Activated naive CD4-positive, alpha-beta T cell treated with anti-CD3 and anti-CD28 coated beads for 36 hours (primary cell): ENCODE measurements at regions of chr7 and their contacts with region 1.

Region 1: DNA sequence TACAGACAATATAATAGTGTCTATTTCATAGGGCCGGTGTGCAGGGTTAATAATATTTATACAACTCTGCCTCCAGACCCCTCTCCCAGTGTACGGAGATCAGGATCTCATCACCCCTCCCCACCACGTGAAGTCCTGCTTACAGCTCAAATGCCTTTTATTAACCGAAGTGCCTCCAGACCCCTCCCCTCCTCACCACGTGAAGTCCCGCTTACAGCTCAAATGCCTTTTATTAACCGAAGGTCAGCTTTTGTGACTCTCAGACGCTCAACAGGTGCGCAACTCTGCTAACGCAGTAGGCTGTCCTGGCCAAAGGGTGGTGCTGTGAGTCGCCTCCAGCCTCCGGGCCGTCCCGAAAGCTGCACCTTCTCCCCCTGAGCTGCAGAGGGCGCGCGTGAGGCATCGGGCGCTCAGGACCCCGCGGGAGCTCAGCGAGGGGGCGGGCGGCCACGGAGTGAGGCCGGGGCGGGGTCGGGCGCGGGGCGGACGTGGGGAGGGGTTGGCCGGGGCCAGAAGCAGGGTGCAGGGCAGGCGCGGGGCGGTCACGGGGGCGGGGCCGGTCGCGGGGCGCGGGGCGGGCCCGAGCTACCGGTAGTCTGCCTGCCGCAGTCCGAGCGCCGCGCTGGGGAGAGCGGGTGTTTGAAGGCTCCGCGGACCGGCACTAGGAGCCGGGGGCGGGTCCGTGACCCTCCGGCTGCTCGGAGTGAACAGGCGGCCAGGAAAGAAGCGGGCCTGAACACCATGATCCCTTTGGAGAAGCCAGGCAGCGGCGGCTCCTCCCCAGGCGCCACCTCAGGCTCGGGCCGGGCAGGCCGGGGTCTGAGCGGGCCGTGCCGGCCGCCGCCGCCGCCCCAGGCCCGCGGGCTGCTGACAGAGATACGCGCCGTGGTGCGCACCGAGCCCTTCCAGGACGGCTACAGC is at the start of gene STK17A:
- DNase-seq: peak; percentile 95
- H3K4me3 Mint-ChIP-seq: peak within 1 kb of the TSS; percentile 86
- H3K27ac Mint-ChIP-seq: peak within 1 kb of the TSS; percentile 93
- H3K4me1 Mint-ChIP-seq: peaks cover 20% of the 10 kb centered on the region
- H3K27me3 Mint-ChIP-seq: peaks cover 7% of the 10 kb centered on the region
- total RNA-seq, gene STK17A: 48.9 to 52.8 TPM

Region 2: DNA sequence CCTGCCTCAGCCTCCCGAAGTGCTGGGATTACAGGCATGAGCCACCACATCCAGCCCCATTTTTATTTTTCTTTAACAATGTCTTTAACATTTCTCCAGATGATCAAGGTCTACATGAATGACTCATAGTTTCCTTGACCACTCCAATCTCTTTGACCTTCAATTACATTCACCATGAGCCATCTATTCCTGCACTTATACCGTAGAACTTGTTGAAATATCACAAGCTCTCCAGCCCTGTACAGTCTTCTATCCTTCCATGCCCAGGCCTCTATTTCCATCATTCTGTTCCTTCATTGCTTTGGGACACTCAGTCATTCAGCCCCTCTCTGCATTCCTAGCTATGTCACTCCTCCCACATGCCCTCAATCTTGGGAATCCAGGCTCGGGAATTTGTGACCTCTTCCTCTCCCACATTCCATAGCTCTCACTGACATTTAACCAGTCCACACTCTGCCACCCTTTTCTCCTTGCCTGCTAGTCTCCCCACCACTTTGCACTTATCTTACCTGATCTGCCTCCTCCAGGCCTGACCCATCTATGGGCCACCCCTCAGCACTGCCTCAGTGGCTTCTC is 151.7 kb before region 1 on chr7:
- CTCF ChIA-PET with region 1: no interaction called
- intact Hi-C with region 1: no loop called
- DNase-seq: no peak
- H3K4me3 Mint-ChIP-seq: no peak overlapping the region
- H3K27ac Mint-ChIP-seq: no peak overlapping the region
- H3K4me1 Mint-ChIP-seq: no peaks in the 10 kb centered on the region
- H3K27me3 Mint-ChIP-seq: no peaks in the 10 kb centered on the region

Region 3: DNA sequence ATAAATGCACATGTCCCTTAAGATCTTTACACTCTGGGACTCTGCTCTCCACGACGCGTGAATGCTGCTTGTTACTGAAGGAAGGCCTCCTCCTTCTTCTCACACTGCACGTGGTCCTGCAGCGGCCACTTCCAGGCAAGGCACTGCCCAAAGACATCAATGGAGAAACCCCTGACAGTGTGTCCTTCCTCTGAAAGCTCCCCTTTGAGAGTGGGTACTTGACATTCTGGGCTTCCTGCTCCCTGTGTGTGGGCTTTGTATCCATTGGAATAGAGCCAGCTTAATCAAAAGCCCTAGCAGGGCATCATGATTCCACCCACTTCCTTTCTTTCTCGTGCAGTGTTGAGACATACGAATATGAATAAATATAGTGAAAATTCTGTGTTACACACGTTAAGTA is 69.5 kb before region 1 on chr7:
- CTCF ChIA-PET with region 1: no interaction called
- intact Hi-C with region 1: no loop called
- DNase-seq: no peak
- H3K4me3 Mint-ChIP-seq: no peak overlapping the region
- H3K27ac Mint-ChIP-seq: no peak overlapping the region
- H3K4me1 Mint-ChIP-seq: peaks cover 3% of the 10 kb centered on the region
- H3K27me3 Mint-ChIP-seq: peaks cover 7% of the 10 kb centered on the region

Region 4: GRCh38 chr7:43602271-43602670 is 19.5 kb after region 1 on chr7:
- CTCF ChIA-PET with region 1: interaction called, 25 read pairs
- intact Hi-C with region 1: no loop called
- DNase-seq: no peak
- H3K4me3 Mint-ChIP-seq: no peak overlapping the region
- H3K27ac Mint-ChIP-seq: no peak overlapping the region
- H3K4me1 Mint-ChIP-seq: peaks cover 46% of the 10 kb centered on the region
- H3K27me3 Mint-ChIP-seq: no peaks in the 10 kb centered on the region

Region 5: GRCh38 chr7:43639858-43640491 is 57.2 kb after region 1 on chr7:
- CTCF ChIA-PET with region 1: interaction called, 172 read pairs
- intact Hi-C with region 1: loop called (anchors 1 kb)
- DNase-seq: no peak
- H3K4me3 Mint-ChIP-seq: no peak overlapping the region
- H3K27ac Mint-ChIP-seq: peak overlapping the region; percentile 65
- H3K4me1 Mint-ChIP-seq: peaks cover 83% of the 10 kb centered on the region
- H3K27me3 Mint-ChIP-seq: no peaks in the 10 kb centered on the region

Region 6: DNA sequence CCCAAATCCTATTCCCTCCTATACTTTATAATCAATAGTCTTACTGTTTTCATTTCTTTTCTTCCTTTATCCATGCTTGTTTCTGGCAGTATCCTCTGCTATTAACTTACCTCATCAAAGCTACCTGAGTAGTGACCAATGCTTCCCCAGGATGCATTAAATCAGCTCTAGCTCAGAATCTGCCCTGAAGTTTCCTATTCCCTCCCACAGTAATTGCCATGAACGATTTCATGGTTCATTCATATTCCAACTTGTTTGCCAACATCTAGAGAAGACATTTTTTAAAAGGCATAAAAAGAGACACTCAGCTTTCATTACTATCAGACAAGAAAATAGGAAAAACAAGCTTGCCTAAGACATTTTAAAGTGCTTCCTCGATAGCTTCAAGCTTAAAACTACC is 104.2 kb after region 1 on chr7:
- CTCF ChIA-PET with region 1: interaction called, 28 read pairs
- intact Hi-C with region 1: no loop called
- DNase-seq: no peak
- H3K4me3 Mint-ChIP-seq: no peak overlapping the region
- H3K27ac Mint-ChIP-seq: no peak overlapping the region
- H3K4me1 Mint-ChIP-seq: peaks cover 61% of the 10 kb centered on the region
- H3K27me3 Mint-ChIP-seq: no peaks in the 10 kb centered on the region

Region 7: GRCh38 chr7:43721193-43721806 is 138.5 kb after region 1 on chr7:
- CTCF ChIA-PET with region 1: interaction called, 116 read pairs
- intact Hi-C with region 1: loop called (anchors 1 kb)
- DNase-seq: no peak
- H3K4me3 Mint-ChIP-seq: no peak overlapping the region
- H3K27ac Mint-ChIP-seq: no peak overlapping the region
- H3K4me1 Mint-ChIP-seq: peaks cover 46% of the 10 kb centered on the region
- H3K27me3 Mint-ChIP-seq: no peaks in the 10 kb centered on the region

Region 8: DNA sequence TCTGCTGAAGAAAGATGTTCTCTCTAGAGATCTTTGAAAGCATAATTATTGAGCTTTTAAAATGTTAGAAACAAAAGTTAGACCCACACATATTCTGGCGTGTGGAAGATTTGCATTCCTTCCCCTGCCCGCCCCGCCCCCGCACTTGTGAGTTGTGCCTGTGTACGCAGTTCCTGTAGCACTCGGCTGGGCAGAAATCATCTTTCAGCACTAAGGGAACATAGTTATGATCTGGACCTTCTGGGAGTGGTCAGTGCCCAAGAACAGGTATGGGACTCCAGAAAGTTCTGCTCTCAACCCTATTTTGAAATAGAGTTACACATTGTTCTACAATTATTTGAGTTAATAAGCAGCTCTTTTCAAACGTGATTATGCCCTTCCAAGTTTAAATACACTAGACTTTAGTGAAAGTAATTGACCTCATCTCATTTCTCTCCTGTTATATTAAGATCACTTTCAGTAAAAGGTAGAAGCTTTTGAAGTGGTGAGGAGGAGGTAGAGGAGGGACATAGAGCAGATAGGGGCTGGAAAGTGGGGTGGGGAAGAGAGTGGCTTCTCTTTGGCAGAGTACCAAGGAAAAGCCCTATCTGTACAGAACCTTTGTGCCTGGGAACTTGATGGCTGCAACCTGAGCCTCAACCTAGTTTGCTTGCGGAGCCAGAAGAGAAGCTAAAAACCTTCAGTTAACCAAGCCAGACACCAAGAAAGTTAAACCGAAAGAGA is 181.4 kb after region 1 on chr7:
- CTCF ChIA-PET with region 1: interaction called, 10 read pairs
- intact Hi-C with region 1: no loop called
- DNase-seq: peak; percentile 75
- H3K4me3 Mint-ChIP-seq: peak overlapping the region; percentile 47
- H3K27ac Mint-ChIP-seq: no peak overlapping the region
- H3K4me1 Mint-ChIP-seq: peaks cover 45% of the 10 kb centered on the region
- H3K27me3 Mint-ChIP-seq: no peaks in the 10 kb centered on the region

Region 9: GRCh38 chr7:43847496-43847895 is 264.7 kb after region 1 on chr7:
- CTCF ChIA-PET with region 1: interaction called, 15 read pairs
- intact Hi-C with region 1: no loop called
- DNase-seq: no peak
- H3K4me3 Mint-ChIP-seq: no peak overlapping the region
- H3K27ac Mint-ChIP-seq: no peak overlapping the region
- H3K4me1 Mint-ChIP-seq: no peaks in the 10 kb centered on the region
- H3K27me3 Mint-ChIP-seq: no peaks in the 10 kb centered on the region

Region 10: DNA sequence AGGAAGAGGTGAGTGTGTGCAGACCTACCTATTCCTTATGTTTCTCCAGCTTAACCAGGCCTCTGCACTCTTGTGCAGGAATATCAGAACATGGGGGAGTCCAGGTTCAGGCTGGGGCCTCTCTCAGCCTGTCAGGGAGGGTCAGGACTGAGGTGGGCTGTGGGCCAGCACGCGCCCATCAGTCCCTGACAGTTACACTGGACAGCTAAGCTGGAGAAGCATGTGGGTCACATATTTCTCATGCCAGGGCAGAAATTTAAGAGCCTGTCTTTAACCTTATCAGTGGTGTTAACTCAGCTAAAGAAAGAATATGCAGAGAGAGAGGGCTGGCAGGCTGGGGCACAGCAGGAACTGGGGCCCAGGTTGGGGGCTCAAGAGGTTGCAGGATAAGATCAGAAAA is 549.3 kb after region 1 on chr7:
- CTCF ChIA-PET with region 1: no interaction called
- intact Hi-C with region 1: no loop called
- DNase-seq: no peak
- H3K4me3 Mint-ChIP-seq: no peak overlapping the region
- H3K27ac Mint-ChIP-seq: no peak overlapping the region
- H3K4me1 Mint-ChIP-seq: no peaks in the 10 kb centered on the region
- H3K27me3 Mint-ChIP-seq: no peaks in the 10 kb centered on the region